OCI-LY7 (cell line): ENCODE measurements at regions of chr3 and their contacts with region 1.

Region 1: GRCh38 chr3:67113802-67114407 is 115.8 kb downstream of the KBTBD8 start:
- DNase-seq: peak; percentile 80
- H3K4me3 ChIP-seq: no peak overlapping the region
- H3K27ac ChIP-seq: no peak overlapping the region
- H3K4me1 ChIP-seq: no peaks in the 10 kb centered on the region
- CTCF ChIP-seq: peak; percentile 99

Region 2: GRCh38 chr3:68876112-68876713 is 1762.3 kb after region 1 on chr3:
- CTCF ChIA-PET with region 1: no interaction called
- POLR2A ChIA-PET with region 1: no interaction called
- intact Hi-C with region 1: loop called (anchors 2 kb)
- DNase-seq: peak; percentile 66
- H3K4me3 ChIP-seq: no peak overlapping the region
- H3K27ac ChIP-seq: no peak overlapping the region
- H3K4me1 ChIP-seq: no peaks in the 10 kb centered on the region
- CTCF ChIP-seq: peak; percentile 99